Ovary (tissue), 10 donors: ENCODE measurements at regions of chr12 and their contacts with region 1.

Region 1: GRCh38 chr12:73106296-73106695 is 834.1 kb downstream of the TRHDE start:
- DNase-seq: no peak
- H3K4me3 ChIP-seq: no peak overlapping the region
- H3K27ac ChIP-seq: no peak overlapping the region
- H3K4me1 ChIP-seq: no peaks in the 10 kb centered on the region
- H3K27me3 ChIP-seq: no peaks in the 10 kb centered on the region
- CTCF ChIP-seq: no peak
- EP300 ChIP-seq: no peak
- POLR2A ChIP-seq: no peak

Region 2: DNA sequence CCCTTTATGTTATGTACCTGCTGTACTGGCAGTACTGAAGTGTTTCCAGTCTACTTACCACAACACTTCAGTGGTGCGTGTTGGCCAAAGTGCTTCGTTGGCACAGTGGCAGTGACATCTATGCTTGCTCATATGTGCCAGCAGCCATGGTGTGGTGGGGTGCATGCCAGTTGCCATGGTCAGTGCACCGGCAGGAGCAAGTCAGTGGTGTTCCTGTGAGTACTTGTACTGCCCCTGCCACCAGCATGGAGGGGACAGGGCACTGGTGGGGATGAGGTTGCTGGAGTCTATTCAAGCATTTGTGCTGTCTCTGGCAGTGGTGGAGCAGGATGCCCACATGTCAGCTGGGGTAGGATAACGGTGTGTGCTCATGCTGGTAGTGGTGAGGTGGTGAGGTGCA is 34.1 kb before region 1 on chr12:
- intact Hi-C with region 1: loop called in 1 of 4 experiments (anchors 2 kb)
- DNase-seq: no peak
- H3K4me3 ChIP-seq: no peak overlapping the region
- H3K27ac ChIP-seq: no peak overlapping the region
- H3K4me1 ChIP-seq: no peaks in the 10 kb centered on the region
- H3K27me3 ChIP-seq: no peaks in the 10 kb centered on the region
- CTCF ChIP-seq: no peak
- EP300 ChIP-seq: no peak
- POLR2A ChIP-seq: no peak